HEK293T (cell line): ENCODE measurements at regions of chr16 and their contacts with region 1.

Region 1: GRCh38 chr16:68022704-68023522 is at the starts of genes DDX28 and DUS2:
- DNase-seq: peak; percentile 91

Region 2: DNA sequence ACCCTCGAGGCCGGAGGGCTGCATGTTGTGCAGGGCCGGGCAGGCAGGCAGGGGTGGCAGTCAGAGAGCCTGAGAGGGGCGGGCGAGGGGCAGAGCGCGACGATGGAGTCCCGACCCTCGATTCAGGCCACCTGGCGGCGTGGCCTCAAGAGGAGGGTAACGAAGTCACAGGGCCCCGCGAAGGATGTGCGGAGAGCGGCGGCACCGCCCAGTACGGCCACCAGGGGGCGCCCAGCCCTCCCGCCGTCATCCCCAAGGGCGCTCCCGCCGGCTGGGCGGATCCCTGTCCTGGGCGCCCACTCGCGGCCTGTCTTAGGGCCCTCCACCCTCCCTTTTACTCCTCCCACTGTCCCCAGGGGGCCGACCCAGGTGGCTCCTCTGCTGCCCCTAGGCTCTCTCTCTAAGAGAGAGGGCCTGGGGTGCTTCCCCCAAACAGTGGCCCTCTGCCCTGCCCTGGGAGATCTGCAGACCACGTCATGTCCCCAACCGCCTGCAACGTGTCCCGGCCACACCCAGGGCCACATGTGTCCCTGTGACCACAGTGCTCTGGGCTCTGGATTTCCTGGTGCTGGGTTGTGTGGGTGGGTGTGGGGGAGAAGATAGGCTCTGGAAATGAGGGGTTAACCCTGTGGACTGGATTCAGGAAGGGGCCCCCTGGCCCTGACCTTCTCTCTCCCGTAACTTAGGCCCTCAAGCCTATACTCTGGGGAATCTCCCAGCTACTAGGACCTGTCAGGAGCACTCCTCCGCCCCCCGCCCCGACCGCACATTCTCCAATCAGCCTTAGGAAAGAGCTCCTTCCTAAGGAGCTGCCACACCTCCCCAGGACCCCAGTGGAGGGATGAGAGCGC is 29.5 kb before region 1 on chr16:
- CTCF ChIA-PET with region 1: no interaction called
- POLR2A ChIA-PET with region 1: interaction called, 15 read pairs
- DNase-seq: peak; percentile 91

Region 3: GRCh38 chr16:68005786-68006286 is 17.1 kb before region 1 on chr16:
- CTCF ChIA-PET with region 1: interaction called, 5 read pairs
- POLR2A ChIA-PET with region 1: interaction called, 13 read pairs
- DNase-seq: no peak

Region 4: DNA sequence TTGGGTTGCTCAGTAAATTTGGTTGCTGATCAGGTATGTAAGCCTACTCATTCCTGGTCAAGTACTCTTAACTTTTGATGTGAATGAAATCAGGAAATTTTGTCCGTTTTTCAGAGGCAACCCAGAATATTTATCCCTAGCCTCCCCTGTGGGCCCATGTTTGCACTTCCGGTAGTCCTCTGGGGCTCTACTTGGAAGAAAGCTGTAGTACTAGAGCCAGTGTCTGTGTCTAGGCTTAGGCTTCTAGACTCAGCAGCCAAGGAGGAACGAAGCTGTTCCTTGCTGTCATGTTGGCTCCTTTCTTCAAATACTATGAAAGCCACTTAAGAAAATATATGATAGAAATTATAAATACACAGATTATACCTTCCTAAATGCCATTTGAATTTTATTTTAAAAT is 191.8 kb after region 1 on chr16:
- CTCF ChIA-PET with region 1: no interaction called
- POLR2A ChIA-PET with region 1: no interaction called
- DNase-seq: no peak